Esophagus squamous epithelium (tissue), 5 donors: ENCODE measurements at regions of chr1 and their contacts with region 1.

Region 1: GRCh38 chr1:61049850-61050540 is 32.4 kb upstream of the NFIA start:
- DNase-seq: peak; percentile 50
- H3K4me3 ChIP-seq: peak overlapping the region; percentile 77 to 95 (median 85)
- H3K27ac ChIP-seq: peak overlapping the region; percentile 96 to 99 (median 98)
- H3K4me1 ChIP-seq: peaks cover 11 to 51% (median 19%) of the 10 kb centered on the region in 3 donors
- H3K27me3 ChIP-seq: no peaks in the 10 kb centered on the region
- CTCF ChIP-seq: peak; percentile 84 to 98 (median 98)
- POLR2A ChIP-seq: peak in 2 of 4 donors; percentile 43 to 54

Region 2: DNA sequence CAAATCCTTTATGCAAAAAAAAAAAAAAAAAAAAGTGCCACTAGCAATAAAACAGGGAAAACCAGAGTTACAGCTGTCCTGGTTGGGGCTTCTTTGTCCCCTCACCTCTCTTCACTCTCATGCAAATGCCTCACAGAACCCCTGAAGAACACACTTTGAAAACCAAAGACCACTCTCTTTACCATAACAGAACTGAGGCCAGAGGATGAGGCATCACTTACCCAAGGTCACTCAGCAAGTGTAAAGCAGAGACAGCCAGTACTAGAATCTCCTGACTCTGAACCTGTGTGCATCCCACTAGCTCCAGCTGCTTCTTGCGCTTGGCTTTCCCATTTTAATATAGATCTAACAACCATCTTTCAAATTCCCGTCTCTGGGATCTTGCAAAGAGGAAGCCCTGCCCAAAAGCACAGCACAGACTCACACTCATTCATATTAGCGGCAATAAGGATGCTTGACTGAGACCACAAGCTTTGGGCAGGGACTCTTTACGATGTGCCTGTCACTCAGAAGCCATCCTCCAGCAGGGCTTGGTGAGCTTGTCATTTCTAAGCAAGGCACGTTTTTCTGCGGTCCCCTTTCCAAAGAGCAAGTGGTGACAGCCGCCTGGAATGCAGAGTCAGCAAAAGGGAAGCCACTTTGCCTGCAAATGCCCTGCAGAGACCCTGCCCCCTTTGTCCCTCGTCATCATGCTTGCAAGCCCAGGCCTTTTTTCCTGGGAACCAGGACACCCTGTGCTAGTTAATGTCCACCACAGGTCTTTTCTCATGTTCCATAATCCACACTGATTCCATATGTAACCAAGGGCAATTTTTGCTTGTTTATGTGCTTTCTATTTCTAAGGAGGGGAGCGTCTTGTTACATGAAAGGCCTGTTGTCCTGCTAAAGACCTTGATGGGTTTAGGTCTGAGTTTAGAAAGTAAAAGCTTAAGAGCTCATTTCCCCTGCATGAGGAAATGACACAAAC is 44.1 kb before region 1 on chr1:
- intact Hi-C with region 1: no loop called
- DNase-seq: no peak
- H3K4me3 ChIP-seq: no peak overlapping the region
- H3K27ac ChIP-seq: no peak overlapping the region
- H3K4me1 ChIP-seq: peaks cover 0 to 14% (median 0%) of the 10 kb centered on the region in 3 donors
- H3K27me3 ChIP-seq: no peaks in the 10 kb centered on the region
- CTCF ChIP-seq: no peak
- POLR2A ChIP-seq: no peak

Region 3: GRCh38 chr1:61152469-61153105 is 102.6 kb after region 1 on chr1:
- intact Hi-C with region 1: no loop called
- DNase-seq: no peak
- H3K4me3 ChIP-seq: no peak overlapping the region
- H3K27ac ChIP-seq: peak overlapping the region; percentile 15 to 75 (median 44)
- H3K4me1 ChIP-seq: peaks cover 21 to 92% (median 44%) of the 10 kb centered on the region in 3 donors
- H3K27me3 ChIP-seq: no peaks in the 10 kb centered on the region
- CTCF ChIP-seq: peak in 2 of 6 experiments; percentile 21 to 43
- POLR2A ChIP-seq: no peak

Region 4: GRCh38 chr1:61190618-61191432 is 140.8 kb after region 1 on chr1:
- intact Hi-C with region 1: no loop called
- DNase-seq: no peak
- H3K4me3 ChIP-seq: no peak overlapping the region
- H3K27ac ChIP-seq: peak overlapping the region in 2 of 4 donors; percentile 35 to 37
- H3K4me1 ChIP-seq: peaks cover 0 to 61% (median 14%) of the 10 kb centered on the region in 3 donors
- H3K27me3 ChIP-seq: no peaks in the 10 kb centered on the region
- CTCF ChIP-seq: no peak
- POLR2A ChIP-seq: no peak

Region 5: DNA sequence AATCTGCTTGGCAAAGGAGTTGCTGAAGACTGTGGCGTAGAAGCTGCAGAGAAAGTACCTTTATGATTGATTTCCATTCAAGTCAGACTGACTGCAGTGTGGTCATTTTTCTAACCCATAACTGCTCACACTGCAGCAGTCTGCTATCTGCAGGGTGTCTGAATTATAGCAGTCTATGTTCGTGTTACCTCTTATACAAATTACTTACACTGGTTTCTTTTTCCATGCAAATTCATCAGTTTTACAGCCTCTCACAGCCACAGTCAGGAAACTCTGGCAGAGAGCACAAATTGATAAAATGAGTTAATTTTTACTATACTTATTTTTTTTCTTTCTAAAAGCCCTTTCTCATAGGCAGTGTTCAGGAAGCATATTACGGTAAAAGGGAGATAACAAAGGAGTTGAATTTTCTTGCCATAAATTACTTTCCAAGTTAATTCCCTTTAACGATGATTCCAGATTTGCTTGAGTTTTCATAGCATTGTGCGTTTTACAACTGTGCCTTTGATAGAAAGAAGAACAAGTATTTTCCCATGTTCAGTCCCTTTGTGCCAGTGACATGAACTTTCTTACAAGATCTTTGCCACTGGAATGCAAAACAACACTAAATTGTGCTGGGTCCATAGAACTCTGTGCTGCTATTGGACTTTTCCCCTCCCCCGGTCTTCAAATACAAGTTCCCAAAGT is 293.9 kb after region 1 on chr1:
- intact Hi-C with region 1: loop called (anchors 10 kb)
- DNase-seq: no peak
- H3K4me3 ChIP-seq: no peak overlapping the region
- H3K27ac ChIP-seq: peak overlapping the region in 2 of 4 donors; percentile 34 to 35
- H3K4me1 ChIP-seq: peaks cover under 1 to 39% (median 3%) of the 10 kb centered on the region in 3 donors
- H3K27me3 ChIP-seq: no peaks in the 10 kb centered on the region
- CTCF ChIP-seq: no peak
- POLR2A ChIP-seq: no peak

Region 6: DNA sequence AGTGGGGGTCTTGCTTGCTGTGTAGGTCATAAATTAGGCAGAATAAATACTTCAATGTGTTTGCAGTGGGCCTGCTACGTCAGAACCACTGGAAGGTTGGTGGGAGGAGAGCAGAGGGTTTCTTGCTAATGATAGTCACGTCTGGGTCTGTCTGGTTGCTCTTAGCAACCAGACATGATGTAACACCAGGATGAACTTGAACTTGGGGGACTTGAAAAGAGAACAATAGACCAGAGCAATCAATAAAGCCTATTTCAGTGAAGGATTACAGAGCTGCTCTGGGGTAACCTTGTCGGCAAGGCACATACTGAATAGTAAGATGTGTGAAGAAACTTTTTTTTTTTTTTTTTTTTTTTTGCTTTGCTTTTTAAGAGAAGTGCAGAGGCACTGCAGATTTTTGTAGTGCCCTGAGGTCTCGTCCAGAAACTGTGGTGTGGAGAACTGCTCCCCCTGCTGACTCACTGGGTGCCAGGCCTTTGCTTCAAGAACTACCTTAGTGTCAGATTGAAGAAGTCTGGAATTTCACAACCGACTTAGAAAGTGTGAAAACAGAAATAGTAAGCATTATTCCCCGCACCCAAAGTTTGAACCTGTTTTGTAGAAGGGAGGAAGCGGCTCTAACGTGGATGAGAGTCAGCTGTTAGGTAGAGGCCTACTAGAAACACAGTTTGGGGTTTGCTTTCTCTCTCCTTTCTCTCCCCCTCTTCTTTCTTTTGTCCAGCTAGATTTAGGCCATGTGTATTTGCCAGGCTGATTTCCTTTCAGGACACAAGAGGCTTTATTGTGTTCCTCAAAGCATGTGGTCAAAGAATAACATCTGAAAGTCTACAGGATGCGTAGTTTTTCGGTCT is 403.3 kb after region 1 on chr1:
- intact Hi-C with region 1: loop called (anchors 10 kb)
- DNase-seq: peak; percentile 51
- H3K4me3 ChIP-seq: no peak overlapping the region
- H3K27ac ChIP-seq: peak overlapping the region; percentile 62 to 85 (median 82)
- H3K4me1 ChIP-seq: peaks cover 43 to 62% (median 44%) of the 10 kb centered on the region in 3 donors
- H3K27me3 ChIP-seq: no peaks in the 10 kb centered on the region
- CTCF ChIP-seq: peak; percentile 26 to 80 (median 70)
- POLR2A ChIP-seq: no peak